AG04450 (cell line): ENCODE measurements at regions of chr12 and their contacts with region 1.

Region 1: GRCh38 chr12:69157023-69157655 is 82.2 kb upstream of the CPSF6 start:
- DNase-seq: peak; percentile 48
- H3K4me3 ChIP-seq: no peak overlapping the region
- H3K27ac ChIP-seq: no peak overlapping the region
- H3K27me3 ChIP-seq: no peaks in the 10 kb centered on the region
- CTCF ChIP-seq: peak; percentile 99

Region 2: DNA sequence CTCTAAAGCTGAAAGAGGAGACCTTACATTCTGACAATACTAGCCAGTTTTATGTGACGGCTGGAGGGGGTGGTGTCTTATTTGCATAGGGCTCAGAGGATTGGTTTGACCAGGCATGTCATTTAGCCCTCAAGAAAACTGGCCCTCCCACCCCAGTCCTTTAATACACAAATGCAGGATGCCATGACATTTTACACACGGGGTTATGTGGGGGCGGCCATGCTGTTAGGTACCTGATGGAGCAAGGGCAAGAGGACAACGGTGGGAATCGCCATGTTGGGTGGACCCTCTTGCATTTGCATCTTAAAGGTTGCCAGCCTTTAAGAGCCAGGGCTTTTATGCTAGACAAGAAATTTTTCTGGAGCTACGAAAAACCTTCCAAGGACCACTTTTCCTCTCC is 325.9 kb before region 1 on chr12:
- CTCF ChIA-PET with region 1: interaction called, 12 read pairs
- POLR2A ChIA-PET with region 1: no interaction called
- DNase-seq: no peak
- H3K4me3 ChIP-seq: no peak overlapping the region
- H3K27ac ChIP-seq: peak overlapping the region; percentile 11
- H3K27me3 ChIP-seq: no peaks in the 10 kb centered on the region
- CTCF ChIP-seq: no peak

Region 3: GRCh38 chr12:68871921-68872320 is 285.2 kb before region 1 on chr12:
- CTCF ChIA-PET with region 1: interaction called, 33 read pairs
- POLR2A ChIA-PET with region 1: no interaction called
- DNase-seq: no peak
- H3K4me3 ChIP-seq: no peak overlapping the region
- H3K27ac ChIP-seq: no peak overlapping the region
- H3K27me3 ChIP-seq: no peaks in the 10 kb centered on the region
- CTCF ChIP-seq: peak; percentile 40

Region 4: GRCh38 chr12:69141074-69141473 is 16.1 kb before region 1 on chr12:
- CTCF ChIA-PET with region 1: interaction called, 12 read pairs
- POLR2A ChIA-PET with region 1: no interaction called
- DNase-seq: no peak
- H3K4me3 ChIP-seq: no peak overlapping the region
- H3K27ac ChIP-seq: no peak overlapping the region
- H3K27me3 ChIP-seq: no peaks in the 10 kb centered on the region
- CTCF ChIP-seq: no peak

Region 5: DNA sequence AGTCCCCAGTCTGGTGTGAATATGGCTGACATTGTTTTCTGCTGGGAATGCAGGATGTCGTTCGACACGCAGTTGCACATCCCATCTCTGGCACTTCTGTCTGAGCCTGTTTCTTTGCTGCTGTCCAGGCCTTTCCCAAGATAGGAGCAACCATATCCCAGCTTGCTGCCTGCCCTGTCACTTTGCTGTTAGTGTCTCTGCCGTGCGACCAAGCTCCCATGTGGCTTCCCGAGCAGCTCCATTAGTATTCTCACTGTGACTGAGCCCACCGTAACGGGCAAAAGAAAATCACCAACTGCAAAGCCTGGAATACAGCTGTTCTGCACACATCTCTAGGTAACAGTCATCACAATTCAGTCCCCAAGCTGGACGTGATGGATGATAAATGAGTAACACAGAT is 16.2 kb after region 1 on chr12:
- CTCF ChIA-PET with region 1: interaction called, 15 read pairs
- POLR2A ChIA-PET with region 1: no interaction called
- DNase-seq: no peak
- H3K4me3 ChIP-seq: no peak overlapping the region
- H3K27ac ChIP-seq: no peak overlapping the region
- H3K27me3 ChIP-seq: no peaks in the 10 kb centered on the region
- CTCF ChIP-seq: no peak

Region 6: GRCh38 chr12:69254046-69254445 is 96.9 kb after region 1 on chr12:
- CTCF ChIA-PET with region 1: interaction called, 28 read pairs
- POLR2A ChIA-PET with region 1: no interaction called
- DNase-seq: no peak
- H3K4me3 ChIP-seq: no peak overlapping the region
- H3K27ac ChIP-seq: no peak overlapping the region
- H3K27me3 ChIP-seq: no peaks in the 10 kb centered on the region
- CTCF ChIP-seq: peak; percentile 56

Region 7: GRCh38 chr12:69385038-69385437 is 227.9 kb after region 1 on chr12:
- CTCF ChIA-PET with region 1: no interaction called
- POLR2A ChIA-PET with region 1: no interaction called
- DNase-seq: no peak
- H3K4me3 ChIP-seq: no peak overlapping the region
- H3K27ac ChIP-seq: no peak overlapping the region
- H3K27me3 ChIP-seq: no peaks in the 10 kb centered on the region
- CTCF ChIP-seq: no peak